ENCODE measurements at regions of chr11 and their contacts with region 1.

Region 1: DNA sequence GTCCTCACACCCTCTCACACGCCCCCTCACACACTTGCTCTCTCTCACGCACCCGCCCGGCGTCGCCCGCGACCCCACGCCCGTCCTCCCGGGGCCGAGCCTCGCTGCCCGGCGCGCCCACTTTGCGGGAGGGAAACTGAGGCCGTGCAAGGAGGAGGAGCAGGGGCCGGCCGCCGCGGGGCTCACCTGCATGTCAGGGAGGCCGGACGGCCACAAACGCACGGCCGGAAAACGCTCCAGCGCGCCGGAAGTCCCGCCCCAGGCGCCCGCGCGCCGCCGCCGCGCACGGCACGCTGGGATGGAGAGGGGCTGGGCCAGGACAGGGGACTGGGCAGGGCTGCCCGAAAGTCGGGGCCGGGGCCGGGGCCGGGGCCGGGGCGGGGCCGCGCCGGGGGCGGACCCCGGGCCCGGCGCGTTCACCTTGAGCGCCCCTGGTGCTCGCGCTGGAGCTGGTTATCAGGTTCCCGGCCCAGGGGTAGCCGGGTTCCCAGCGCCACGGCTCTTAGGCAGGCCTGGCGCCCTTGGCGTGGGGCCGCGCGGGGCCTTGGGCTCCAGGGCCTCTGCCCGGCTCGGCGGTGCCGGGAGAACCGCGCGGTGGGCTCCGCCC is at the start of gene CHID1:
- DNase-seq: peak; percentile 51 to 89 (median 80)
- ATAC-seq: peak; percentile 94
- H3K4me3 ChIP-seq: peak within 1 kb of the TSS; percentile 63 to 92
- H3K4me3 Mint-ChIP-seq: peak within 1 kb of the TSS; percentile 91
- H3K27ac ChIP-seq: peak within 1 kb of the TSS; percentile 28 to 47
- H3K27ac Mint-ChIP-seq: peak within 1 kb of the TSS; percentile 71
- H3K4me1 ChIP-seq: peaks cover 16% of the 10 kb centered on the region
- H3K4me1 Mint-ChIP-seq: peaks cover 23% of the 10 kb centered on the region
- H3K27me3 ChIP-seq: no peaks in the 10 kb centered on the region
- H3K27me3 Mint-ChIP-seq: no peaks in the 10 kb centered on the region
- CTCF ChIP-seq: no peak
- total RNA-seq, gene CHID1: 16.0 to 18.1 TPM

Region 2: DNA sequence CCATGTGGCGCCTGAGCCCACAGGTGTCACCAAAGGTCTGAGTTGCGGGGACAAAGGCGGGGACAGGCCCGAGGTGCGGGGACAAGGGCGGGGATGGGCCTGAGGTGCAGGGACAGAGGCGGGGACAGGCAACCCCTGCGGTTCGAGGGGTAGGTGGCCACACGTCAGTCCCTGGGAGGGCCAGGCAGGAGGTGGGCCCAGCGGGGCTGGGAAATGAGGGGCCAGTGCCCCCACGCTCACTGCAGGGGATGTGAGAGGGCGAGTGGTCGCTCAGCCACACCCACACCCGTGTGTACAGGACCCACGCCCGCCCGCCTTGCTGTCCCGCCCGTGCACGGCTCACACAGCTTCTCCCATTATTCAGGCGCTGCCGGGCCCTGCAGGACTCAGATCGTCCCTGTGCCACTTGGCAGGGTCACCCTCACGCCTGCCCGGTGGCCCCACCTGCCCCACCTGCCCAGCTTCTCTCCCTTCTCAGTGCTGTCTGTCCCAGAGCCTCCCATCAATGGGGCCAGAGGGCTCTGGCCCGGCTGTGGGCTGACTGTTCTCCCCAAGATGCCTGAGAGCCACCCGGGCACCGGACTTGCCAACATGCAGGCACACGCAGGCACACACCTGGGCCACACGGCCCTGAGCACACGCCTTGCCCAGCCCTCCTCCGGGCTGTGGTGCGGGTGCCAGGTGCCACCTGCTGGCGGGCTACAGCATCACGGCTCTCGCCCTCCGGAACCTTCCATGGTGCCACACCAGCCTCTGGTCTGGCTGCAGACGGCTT is 140.1 kb after region 1 on chr11:
- CTCF ChIA-PET with region 1: no interaction called
- POLR2A ChIA-PET with region 1: no interaction called
- intact Hi-C with region 1: loop called in 1 of 2 experiments (anchors 1 kb)
- DNase-seq: peak; percentile 54 to 85 (median 70)
- ATAC-seq: peak; percentile 99
- H3K4me3 ChIP-seq: no peak overlapping the region
- H3K4me3 Mint-ChIP-seq: no peak overlapping the region
- H3K27ac ChIP-seq: no peak overlapping the region
- H3K27ac Mint-ChIP-seq: no peak overlapping the region
- H3K4me1 ChIP-seq: peaks cover 5% of the 10 kb centered on the region
- H3K4me1 Mint-ChIP-seq: no peaks in the 10 kb centered on the region
- H3K27me3 ChIP-seq: peaks cover 0 to 11% of the 10 kb centered on the region in 2 experiments
- H3K27me3 Mint-ChIP-seq: peaks cover 18% of the 10 kb centered on the region
- CTCF ChIP-seq: peak; percentile 87

Measured in CD8-positive, alpha-beta T cell (primary cell).